ENCODE measurements at regions of chr14 and their contacts with region 1.

Region 1: GRCh38 chr14:61080591-61081010 is 99.6 kb downstream of the SLC38A6 start:
- DNase-seq: peak; percentile 94
- H3K4me3 ChIP-seq: peak overlapping the region; percentile 60
- H3K27ac ChIP-seq: peak overlapping the region; percentile 99
- H3K4me1 ChIP-seq: peaks cover 67% of the 10 kb centered on the region
- CTCF ChIP-seq: peak; percentile 53

Region 2: GRCh38 chr14:60628892-60629291 is 451.7 kb before region 1 on chr14:
- CTCF ChIA-PET with region 1: no interaction called
- POLR2A ChIA-PET with region 1: no interaction called
- intact Hi-C with region 1: loop called (anchors 5 kb)
- DNase-seq: no peak
- H3K4me3 ChIP-seq: no peak overlapping the region
- H3K27ac ChIP-seq: no peak overlapping the region
- H3K4me1 ChIP-seq: peaks cover 5% of the 10 kb centered on the region
- CTCF ChIP-seq: no peak

Region 3: GRCh38 chr14:60862286-60862685 is 218.3 kb before region 1 on chr14:
- CTCF ChIA-PET with region 1: no interaction called
- POLR2A ChIA-PET with region 1: no interaction called
- intact Hi-C with region 1: no loop called
- DNase-seq: no peak
- H3K4me3 ChIP-seq: no peak overlapping the region
- H3K27ac ChIP-seq: no peak overlapping the region
- H3K4me1 ChIP-seq: no peaks in the 10 kb centered on the region
- CTCF ChIP-seq: no peak

Region 4: DNA sequence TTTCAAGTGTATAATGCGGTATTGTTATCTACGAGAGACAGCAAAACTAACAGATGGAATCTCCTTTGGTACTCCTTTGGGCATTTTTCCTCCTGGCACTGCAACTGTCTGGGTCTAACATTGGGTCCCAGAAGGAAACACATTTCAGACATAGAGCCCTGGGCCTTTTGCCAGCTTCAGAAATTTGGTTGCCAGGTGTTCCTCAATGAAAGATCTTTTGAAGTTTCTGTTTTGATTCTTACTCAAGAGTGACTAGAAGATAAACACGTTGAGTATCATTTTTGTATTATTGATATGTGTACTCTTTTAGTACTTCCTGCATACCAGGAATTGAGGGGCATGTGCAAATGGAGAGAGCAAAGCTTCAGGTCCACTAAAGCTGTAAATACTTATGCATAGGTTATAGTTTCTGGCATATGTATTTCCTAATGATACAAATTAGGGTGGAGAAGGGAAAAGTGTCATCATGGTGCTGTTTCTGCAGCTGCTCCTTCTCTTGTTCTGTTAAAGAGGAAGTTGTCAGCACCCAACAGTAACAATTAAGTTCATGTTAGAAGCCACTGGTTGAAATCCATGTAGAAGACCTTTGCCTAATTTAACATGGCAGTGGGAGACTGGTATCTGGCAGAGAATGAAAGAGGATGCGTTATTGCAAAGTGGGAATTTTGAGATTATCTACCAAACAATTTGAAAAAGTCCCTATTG is 46.0 kb before region 1 on chr14:
- CTCF ChIA-PET with region 1: no interaction called
- POLR2A ChIA-PET with region 1: interaction called, 5 read pairs
- intact Hi-C with region 1: loop called (anchors 2 kb)
- DNase-seq: peak; percentile 79
- H3K4me3 ChIP-seq: peak overlapping the region; percentile 47
- H3K27ac ChIP-seq: peak overlapping the region; percentile 87
- H3K4me1 ChIP-seq: peaks cover 54% of the 10 kb centered on the region
- CTCF ChIP-seq: no peak; the same call in 1 of the 2 replicates

Region 5: GRCh38 chr14:61125867-61126572 is 45.4 kb after region 1 on chr14:
- CTCF ChIA-PET with region 1: no interaction called
- POLR2A ChIA-PET with region 1: no interaction called
- intact Hi-C with region 1: no loop called
- DNase-seq: no peak
- H3K4me3 ChIP-seq: no peak overlapping the region
- H3K27ac ChIP-seq: no peak overlapping the region
- H3K4me1 ChIP-seq: peaks cover 5% of the 10 kb centered on the region
- CTCF ChIP-seq: no peak

Measured in OCI-LY7 (cell line).